Activated CD8-positive, alpha-beta T cell treated with anti-CD3 and anti-CD28 coated beads for 36 hours (primary cell): ENCODE measurements at regions of chr5 and their contacts with region 1.

Region 1: DNA sequence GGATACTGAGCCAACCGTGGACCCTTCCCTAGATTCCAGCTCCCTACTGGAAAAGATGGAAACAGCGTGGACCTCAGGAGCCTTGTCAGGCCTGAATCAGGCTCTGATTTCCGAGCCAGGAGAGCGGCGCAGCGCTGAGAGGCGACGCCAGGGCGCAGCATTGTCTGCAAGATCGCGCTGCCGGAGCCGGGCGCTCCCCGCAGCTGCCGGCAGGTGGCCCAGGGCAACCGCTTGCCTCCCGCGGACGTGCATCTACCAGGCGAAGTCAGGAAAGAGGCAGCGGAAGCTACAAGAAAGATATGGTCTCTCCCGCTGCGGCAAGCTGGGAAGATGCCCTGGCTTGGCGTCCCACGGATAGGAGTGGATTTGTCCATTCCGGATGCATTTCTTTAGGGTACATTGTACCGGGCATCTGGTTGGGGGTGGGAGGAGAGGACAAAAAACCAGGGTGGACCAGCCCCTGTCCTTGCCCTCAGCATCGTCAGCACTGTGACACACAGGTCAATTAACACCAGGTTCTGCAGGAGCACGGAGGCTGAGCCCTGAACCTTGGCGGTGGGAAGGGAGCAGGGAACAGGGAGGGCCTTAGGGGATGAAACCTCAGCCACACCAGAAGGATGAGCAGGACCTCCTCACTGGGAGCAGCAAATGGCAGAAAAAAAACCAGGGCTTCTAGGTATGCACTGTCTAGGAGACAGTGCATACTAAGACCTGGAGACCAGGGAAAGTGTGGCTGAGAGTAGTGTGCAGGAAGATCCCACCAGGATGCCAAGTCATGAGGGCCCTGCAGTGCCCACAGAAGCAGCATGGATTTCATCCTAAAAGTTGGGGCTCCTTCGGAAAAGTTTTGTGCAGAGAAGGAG is 55.9 kb downstream of the SFXN1 start:
- DNase-seq: peak; percentile 90
- ATAC-seq: peak; percentile 94
- H3K4me3 Mint-ChIP-seq: peak overlapping the region; percentile 57
- H3K27ac Mint-ChIP-seq: peak overlapping the region; percentile 67
- H3K4me1 Mint-ChIP-seq: peaks cover 59% of the 10 kb centered on the region
- H3K27me3 Mint-ChIP-seq: no peaks in the 10 kb centered on the region
- CTCF ChIP-seq: peak; percentile 100

Region 2: DNA sequence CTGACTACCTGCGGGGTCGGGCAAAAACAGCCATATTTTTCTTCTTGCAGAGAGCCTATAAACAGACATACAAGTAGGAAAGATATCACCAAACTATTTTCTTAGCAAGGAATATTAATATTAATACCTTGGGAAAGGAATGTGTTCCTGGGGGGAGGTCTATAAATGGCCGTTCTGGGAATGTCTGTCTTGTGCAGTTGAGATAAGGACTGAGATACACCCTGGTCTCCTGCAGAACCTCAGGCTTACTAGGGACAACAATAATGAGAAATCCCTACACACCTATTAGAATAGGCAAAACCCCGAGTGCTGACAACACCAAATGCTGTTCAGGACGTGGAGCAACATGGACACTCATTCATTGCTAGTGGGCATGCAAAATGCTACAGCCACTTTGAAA is 387.6 kb before region 1 on chr5:
- CTCF ChIA-PET with region 1: no interaction called
- POLR2A ChIA-PET with region 1: no interaction called
- intact Hi-C with region 1: no loop called
- DNase-seq: no peak
- ATAC-seq: no peak
- H3K4me3 Mint-ChIP-seq: no peak overlapping the region
- H3K27ac Mint-ChIP-seq: no peak overlapping the region
- H3K4me1 Mint-ChIP-seq: no peaks in the 10 kb centered on the region
- H3K27me3 Mint-ChIP-seq: no peaks in the 10 kb centered on the region
- CTCF ChIP-seq: no peak

Region 3: DNA sequence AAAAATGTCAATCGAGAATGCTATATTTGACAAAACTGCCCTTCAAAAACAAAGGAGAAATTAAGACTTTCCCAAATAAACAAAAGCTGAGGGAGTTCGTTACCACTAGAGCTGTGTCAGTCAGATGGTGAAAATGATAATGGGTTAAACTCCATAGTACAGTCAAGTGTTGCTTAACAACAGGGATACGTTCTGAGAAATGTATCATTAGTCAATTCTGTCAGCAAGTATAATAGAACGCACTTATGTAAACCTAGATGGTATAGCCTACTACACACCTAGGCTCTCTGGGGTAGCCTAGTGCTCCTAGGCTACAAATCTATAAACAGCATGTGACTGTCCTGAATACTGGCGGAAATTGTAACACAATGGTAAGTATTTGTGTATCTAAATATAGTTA is 229.1 kb before region 1 on chr5:
- CTCF ChIA-PET with region 1: no interaction called
- POLR2A ChIA-PET with region 1: no interaction called
- intact Hi-C with region 1: no loop called
- DNase-seq: no peak
- ATAC-seq: no peak
- H3K4me3 Mint-ChIP-seq: no peak overlapping the region
- H3K27ac Mint-ChIP-seq: no peak overlapping the region
- H3K4me1 Mint-ChIP-seq: no peaks in the 10 kb centered on the region
- H3K27me3 Mint-ChIP-seq: peaks cover 3% of the 10 kb centered on the region
- CTCF ChIP-seq: no peak

Region 4: DNA sequence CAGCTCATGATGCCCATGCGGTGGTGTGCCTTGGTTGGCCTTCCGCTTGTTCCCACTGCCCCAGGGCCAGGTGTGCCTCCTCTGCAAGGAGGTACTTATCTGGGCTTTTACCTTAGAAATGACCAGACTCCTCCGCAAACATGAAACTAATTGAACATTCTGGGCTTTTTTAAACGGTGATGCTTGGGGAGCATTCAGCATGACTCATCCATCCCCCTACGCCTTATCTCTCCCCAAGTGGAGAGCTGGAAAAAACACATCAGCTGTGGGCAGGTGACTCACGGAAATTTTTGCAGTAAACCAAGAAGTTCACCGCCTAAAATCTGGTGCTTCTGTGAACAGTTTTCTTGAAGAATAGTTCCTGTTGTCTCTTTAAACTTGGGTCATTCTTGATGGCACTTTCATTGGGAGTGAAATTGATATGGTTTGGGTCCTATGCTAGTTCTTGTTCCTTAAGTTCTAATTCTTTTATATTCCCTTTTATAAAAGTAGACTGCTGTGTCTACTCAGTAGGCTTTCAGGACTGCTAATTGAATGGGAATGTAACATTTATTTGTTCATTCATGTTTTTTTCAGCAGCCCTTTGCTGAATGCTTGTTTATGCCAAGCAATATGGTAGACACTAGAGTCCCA is 16.4 kb before region 1 on chr5:
- CTCF ChIA-PET with region 1: interaction called, 24 read pairs
- POLR2A ChIA-PET with region 1: interaction called, 10 read pairs
- intact Hi-C with region 1: no loop called
- DNase-seq: peak; percentile 93
- ATAC-seq: peak; percentile 49
- H3K4me3 Mint-ChIP-seq: peak overlapping the region; percentile 59
- H3K27ac Mint-ChIP-seq: peak overlapping the region; percentile 99
- H3K4me1 Mint-ChIP-seq: peaks cover 87% of the 10 kb centered on the region
- H3K27me3 Mint-ChIP-seq: no peaks in the 10 kb centered on the region
- CTCF ChIP-seq: no peak

Region 5: GRCh38 chr5:175572886-175573285 is 38.6 kb after region 1 on chr5:
- CTCF ChIA-PET with region 1: interaction called, 22 read pairs
- POLR2A ChIA-PET with region 1: no interaction called
- intact Hi-C with region 1: no loop called
- DNase-seq: no peak
- ATAC-seq: no peak
- H3K4me3 Mint-ChIP-seq: no peak overlapping the region
- H3K27ac Mint-ChIP-seq: no peak overlapping the region
- H3K4me1 Mint-ChIP-seq: peaks cover 5% of the 10 kb centered on the region
- H3K27me3 Mint-ChIP-seq: peaks cover 15% of the 10 kb centered on the region
- CTCF ChIP-seq: no peak

Region 6: GRCh38 chr5:175638305-175638704 is 104.0 kb after region 1 on chr5:
- CTCF ChIA-PET with region 1: interaction called, 10 read pairs
- POLR2A ChIA-PET with region 1: no interaction called
- intact Hi-C with region 1: no loop called
- DNase-seq: no peak
- ATAC-seq: no peak
- H3K4me3 Mint-ChIP-seq: no peak overlapping the region
- H3K27ac Mint-ChIP-seq: no peak overlapping the region
- H3K4me1 Mint-ChIP-seq: peaks cover 35% of the 10 kb centered on the region
- H3K27me3 Mint-ChIP-seq: peaks cover 1% of the 10 kb centered on the region
- CTCF ChIP-seq: no peak

Region 7: GRCh38 chr5:175689147-175689991 is 155.1 kb after region 1 on chr5:
- CTCF ChIA-PET with region 1: interaction called, 119 read pairs
- POLR2A ChIA-PET with region 1: no interaction called
- intact Hi-C with region 1: no loop called
- DNase-seq: no peak
- ATAC-seq: no peak
- H3K4me3 Mint-ChIP-seq: no peak overlapping the region
- H3K27ac Mint-ChIP-seq: no peak overlapping the region
- H3K4me1 Mint-ChIP-seq: peaks cover 26% of the 10 kb centered on the region
- H3K27me3 Mint-ChIP-seq: no peaks in the 10 kb centered on the region
- CTCF ChIP-seq: no peak

Region 8: GRCh38 chr5:175724311-175725275 is 190.3 kb after region 1 on chr5:
- CTCF ChIA-PET with region 1: interaction called, 100 read pairs
- POLR2A ChIA-PET with region 1: interaction called, 3 read pairs
- intact Hi-C with region 1: loop called (anchors 2 kb)
- DNase-seq: no peak
- ATAC-seq: no peak
- H3K4me3 Mint-ChIP-seq: no peak overlapping the region
- H3K27ac Mint-ChIP-seq: no peak overlapping the region
- H3K4me1 Mint-ChIP-seq: peaks cover 1% of the 10 kb centered on the region
- H3K27me3 Mint-ChIP-seq: peaks cover 5% of the 10 kb centered on the region
- CTCF ChIP-seq: no peak